MCF 10A (cell line): ENCODE measurements at regions of chr2 and their contacts with region 1.

Region 1: DNA sequence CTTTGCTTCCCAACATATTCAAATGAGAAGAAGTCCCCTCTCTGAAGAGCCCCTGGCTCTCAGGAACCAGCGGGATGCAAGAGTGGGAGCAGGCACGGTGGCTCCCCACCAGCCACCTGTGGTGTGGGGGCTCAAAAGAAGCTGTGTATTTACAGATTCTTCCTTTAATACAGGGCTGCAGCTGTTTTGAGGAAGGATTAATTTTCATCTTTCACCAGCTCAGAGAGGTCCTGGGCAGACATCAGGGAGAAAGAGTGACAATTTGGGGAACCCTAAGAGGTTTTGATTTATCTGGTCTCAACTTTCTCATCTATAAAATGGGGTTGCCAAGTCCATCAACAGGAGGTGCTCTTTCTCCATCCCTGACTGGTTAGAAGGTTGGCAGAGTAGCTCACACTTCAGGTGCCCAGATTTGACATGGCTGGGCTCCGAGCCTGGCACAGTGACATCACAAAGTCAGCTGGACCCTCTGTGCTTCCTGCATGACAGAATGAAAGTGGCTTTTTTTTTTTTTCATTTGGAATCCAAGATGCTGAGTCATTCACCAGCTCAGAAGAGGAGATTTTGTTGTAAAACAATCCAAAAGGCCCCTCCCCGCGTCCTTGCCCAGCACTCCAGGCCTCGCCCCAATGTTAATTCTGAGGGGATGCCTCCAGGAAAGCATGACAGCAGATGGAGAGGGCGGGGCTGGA is 15.5 kb upstream of the SIX2 start:
- DNase-seq: peak; percentile 96
- H3K4me3 Mint-ChIP-seq: no peak overlapping the region
- H3K27ac Mint-ChIP-seq: peak overlapping the region; percentile 8
- H3K4me1 Mint-ChIP-seq: peaks cover 28% of the 10 kb centered on the region
- H3K27me3 Mint-ChIP-seq: no peaks in the 10 kb centered on the region
- CTCF ChIP-seq: peak; percentile 54

Region 2: GRCh38 chr2:45237850-45238542 is 213.2 kb after region 1 on chr2:
- CTCF ChIA-PET with region 1: no interaction called
- POLR2A ChIA-PET with region 1: no interaction called
- intact Hi-C with region 1: loop called (anchors 1 kb)
- DNase-seq: peak; percentile 96
- H3K4me3 Mint-ChIP-seq: peak overlapping the region; percentile 22
- H3K27ac Mint-ChIP-seq: peak overlapping the region; percentile 95
- H3K4me1 Mint-ChIP-seq: peaks cover 23% of the 10 kb centered on the region
- H3K27me3 Mint-ChIP-seq: no peaks in the 10 kb centered on the region
- CTCF ChIP-seq: peak; percentile 34

Region 3: GRCh38 chr2:45439788-45440773 is 415.3 kb after region 1 on chr2:
- CTCF ChIA-PET with region 1: no interaction called
- POLR2A ChIA-PET with region 1: no interaction called
- intact Hi-C with region 1: loop called (anchors 1 kb)
- DNase-seq: peak; percentile 9
- H3K4me3 Mint-ChIP-seq: no peak overlapping the region
- H3K27ac Mint-ChIP-seq: peak overlapping the region; percentile 35
- H3K4me1 Mint-ChIP-seq: peaks cover 15% of the 10 kb centered on the region
- H3K27me3 Mint-ChIP-seq: no peaks in the 10 kb centered on the region
- CTCF ChIP-seq: no peak